ENCODE measurements at regions of chr4 and their contacts with region 1.

Region 1: GRCh38 chr4:54233277-54233696 is 4.2 kb downstream of the PDGFRA start:
- DNase-seq: peak; percentile 85
- CTCF ChIP-seq: peak; percentile 87

Region 2: DNA sequence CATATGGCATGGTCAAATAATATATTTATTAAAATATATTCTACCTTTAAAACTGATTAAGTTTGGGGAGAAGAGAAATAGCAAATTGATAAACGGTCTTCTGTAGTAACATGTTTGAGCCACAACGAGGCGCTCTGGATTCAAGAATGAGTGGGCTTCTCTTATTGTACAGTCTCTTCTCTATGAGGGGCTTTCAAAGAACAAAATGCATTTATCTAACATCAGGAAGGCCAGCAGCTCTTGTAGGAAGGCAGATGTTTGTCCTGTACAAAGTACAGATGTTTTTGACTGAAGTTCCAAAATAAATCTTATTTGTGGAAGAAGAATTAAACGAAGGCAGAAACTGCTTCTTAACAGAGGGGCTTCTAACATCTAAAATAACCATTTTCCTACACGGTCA is 1217.6 kb before region 1 on chr4:
- CTCF ChIA-PET with region 1: interaction called, 35 read pairs
- POLR2A ChIA-PET with region 1: no interaction called
- DNase-seq: no peak
- CTCF ChIP-seq: peak; percentile 56

Region 3: GRCh38 chr4:53537606-53538005 is 695.7 kb before region 1 on chr4:
- CTCF ChIA-PET with region 1: no interaction called
- POLR2A ChIA-PET with region 1: no interaction called
- DNase-seq: no peak
- CTCF ChIP-seq: no peak

Region 4: GRCh38 chr4:53810643-53811042 is 422.6 kb before region 1 on chr4:
- CTCF ChIA-PET with region 1: no interaction called
- POLR2A ChIA-PET with region 1: no interaction called
- DNase-seq: no peak
- CTCF ChIP-seq: no peak

Region 5: DNA sequence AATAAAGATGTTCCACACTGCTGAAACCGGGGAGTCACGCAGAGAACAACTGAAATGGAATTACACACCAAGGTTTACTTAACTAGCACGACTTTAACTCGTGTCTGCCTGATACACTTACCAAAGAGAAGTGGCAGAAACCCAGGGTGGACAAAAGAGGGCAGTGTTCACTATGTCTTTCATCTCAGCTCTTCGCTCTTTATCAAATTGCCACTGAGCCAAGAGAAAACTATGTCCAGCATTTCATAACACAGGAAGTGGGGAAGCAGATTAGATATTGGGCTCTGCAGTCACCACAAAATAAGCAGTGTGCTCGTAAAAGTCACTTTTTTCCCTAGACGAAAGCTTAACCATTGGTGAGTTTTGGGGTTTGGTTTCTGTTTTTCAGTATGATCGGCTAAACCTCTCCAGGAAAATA is 324.6 kb before region 1 on chr4:
- CTCF ChIA-PET with region 1: interaction called, 113 read pairs
- POLR2A ChIA-PET with region 1: no interaction called
- DNase-seq: peak; percentile 35
- CTCF ChIP-seq: peak; percentile 62

Region 6: DNA sequence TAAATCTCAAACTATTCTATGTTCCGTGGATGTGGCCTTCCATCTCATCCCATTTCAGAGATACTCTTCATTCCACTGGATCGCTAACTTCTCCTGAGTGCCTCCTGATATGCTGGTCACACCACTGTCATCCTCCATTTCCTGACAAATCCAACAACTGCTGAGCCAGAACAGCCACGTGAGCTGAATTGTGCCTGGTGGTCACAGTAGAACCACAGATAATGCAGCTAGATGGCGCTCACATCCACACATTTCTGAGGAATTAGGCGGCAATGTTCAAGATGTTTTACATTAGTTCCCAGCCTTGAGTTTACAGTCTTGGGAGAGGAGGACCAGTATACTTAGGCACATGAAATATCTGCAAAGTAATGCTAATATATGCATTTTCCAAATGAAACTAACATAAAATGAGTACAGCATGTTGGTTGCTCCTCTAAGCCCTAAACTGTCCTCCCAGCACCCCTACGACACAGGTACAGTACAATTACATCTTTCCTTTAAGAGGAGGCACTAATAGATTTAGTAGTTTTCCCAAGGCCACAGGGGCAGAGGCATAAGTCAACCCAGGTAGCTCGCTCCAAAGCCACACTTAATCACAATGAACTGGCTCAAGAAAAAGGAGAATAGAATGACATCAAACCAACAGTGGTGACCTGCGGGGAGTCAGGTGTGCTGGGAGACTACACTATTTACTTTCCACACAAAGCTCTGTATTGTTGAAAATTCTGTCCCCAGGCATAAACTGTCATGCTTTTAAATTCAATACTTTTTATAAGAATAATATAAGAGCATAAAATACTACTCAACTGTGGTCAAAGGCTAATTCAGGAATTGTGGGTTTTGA is 303.1 kb before region 1 on chr4:
- CTCF ChIA-PET with region 1: interaction called, 82 read pairs
- POLR2A ChIA-PET with region 1: no interaction called
- DNase-seq: peak; percentile 55
- CTCF ChIP-seq: peak; percentile 65

Region 7: GRCh38 chr4:54255876-54256275 is 22.6 kb after region 1 on chr4:
- CTCF ChIA-PET with region 1: interaction called, 24 read pairs
- POLR2A ChIA-PET with region 1: no interaction called
- DNase-seq: no peak
- CTCF ChIP-seq: no peak